ENCODE measurements at regions of chr1 and their contacts with region 1.

Region 1: GRCh38 chr1:16440470-16441281 is at the start of gene NECAP2:
- DNase-seq: peak; percentile 90 to 100
- H3K4me3 ChIP-seq: peak within 1 kb of the TSS; percentile 66 to 96 (median 77)
- H3K27ac ChIP-seq: peak within 1 kb of the TSS; percentile 47; the same call in 1 of the 2 replicates
- H3K4me1 ChIP-seq: peaks cover 0 to 2% (median 0%) of the 10 kb centered on the region in 4 experiments; a peak in 3 of 7 replicates
- H3K27me3 ChIP-seq: peaks cover 0 to 4% (median 3%) of the 10 kb centered on the region in 4 experiments; a peak in 1 of 7 replicates
- CTCF ChIP-seq: peak; percentile 85 to 96 (median 86)
- EP300 ChIP-seq: peak in 1 of 2 experiments; percentile 70; a peak in 1 of 3 replicates
- POLR2A ChIP-seq: peak; percentile 21 to 93
- RAD21 ChIP-seq: peak; percentile 43 to 55
- total RNA-seq, gene NECAP2: 24.4 and 26.6 TPM in 2 replicates

Region 2: DNA sequence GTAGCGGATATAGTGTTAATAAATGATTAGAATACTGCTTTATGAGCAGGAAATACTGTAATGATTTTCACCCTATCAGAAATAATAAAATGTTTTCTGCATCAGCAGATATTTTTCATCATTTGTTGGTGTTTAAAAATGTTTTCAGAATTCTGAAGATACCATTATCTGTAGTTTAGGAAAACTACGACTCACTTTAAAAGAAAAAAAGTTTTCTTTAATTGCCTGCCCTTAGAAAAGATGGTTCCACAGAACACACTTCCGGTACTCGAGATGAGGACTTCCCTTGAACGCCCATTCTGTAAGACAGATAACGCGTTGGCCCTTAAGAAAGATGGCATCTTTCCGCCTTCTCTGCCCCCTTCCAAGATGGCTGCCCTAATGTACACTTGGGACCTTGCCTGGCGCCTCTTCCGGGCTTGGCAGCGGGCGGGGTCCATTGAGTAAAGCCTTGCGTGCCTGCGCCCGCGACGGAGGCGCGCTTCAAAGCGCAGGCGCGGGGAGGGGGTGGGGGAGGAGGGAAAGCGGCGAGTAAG is 73.9 kb before region 1 on chr1 and contains the start of gene SZRD1:
- CTCF ChIA-PET with region 1: interaction called, 11 read pairs
- POLR2A ChIA-PET with region 1: interaction called, 3 read pairs
- DNase-seq: peak; percentile 82 to 97
- H3K4me3 ChIP-seq: peak within 1 kb of the TSS; percentile 72 to 91 (median 80)
- H3K27ac ChIP-seq: peak within 1 kb of the TSS; percentile 88
- H3K4me1 ChIP-seq: peaks cover 0 to 3% (median 1%) of the 10 kb centered on the region in 4 experiments; a peak in 2 of 7 replicates
- H3K27me3 ChIP-seq: no peaks in the 10 kb centered on the region
- CTCF ChIP-seq: no peak
- EP300 ChIP-seq: 0 out of 3 replicates have a peak, but pooled peaks of 1 of the 2 experiments have one; percentile 53
- POLR2A ChIP-seq: no peak
- RAD21 ChIP-seq: no peak
- total RNA-seq, gene SZRD1: 108 and 116 TPM in 2 replicates

Region 3: GRCh38 chr1:16425125-16426025 is 15.3 kb before region 1 on chr1:
- CTCF ChIA-PET with region 1: interaction called, 13 read pairs
- POLR2A ChIA-PET with region 1: interaction called, 6 read pairs
- DNase-seq: no peak
- H3K4me3 ChIP-seq: no peak overlapping the region
- H3K27ac ChIP-seq: no peak overlapping the region
- H3K4me1 ChIP-seq: no peaks in the 10 kb centered on the region
- H3K27me3 ChIP-seq: 0 out of 7 replicates have a peak, but pooled peaks cover 0 to 2% (median 0%) of the 10 kb centered on the region in 4 experiments
- CTCF ChIP-seq: no peak
- EP300 ChIP-seq: no peak
- POLR2A ChIP-seq: no peak
- RAD21 ChIP-seq: no peak

Region 4: DNA sequence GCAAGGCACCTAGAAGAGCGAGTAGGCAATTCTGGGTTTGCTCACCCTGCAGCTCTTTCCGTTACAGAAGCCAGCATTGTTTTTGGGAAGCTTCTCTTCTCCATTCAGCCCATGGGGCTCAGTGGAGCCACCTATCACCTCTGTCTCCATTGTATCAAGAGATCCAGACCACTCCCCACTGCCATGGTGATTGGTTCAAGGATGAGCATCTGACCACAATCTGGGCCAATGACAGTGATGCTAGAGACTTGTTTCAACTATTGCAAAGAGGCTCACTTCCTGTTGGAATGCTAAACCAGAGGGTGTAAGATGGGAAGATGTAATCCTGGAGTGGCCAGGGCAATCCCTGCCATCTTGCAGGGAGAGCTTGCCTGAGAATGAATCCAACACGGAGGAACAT is 10.1 kb before region 1 on chr1:
- CTCF ChIA-PET with region 1: interaction called, 13 read pairs
- POLR2A ChIA-PET with region 1: interaction called, 6 read pairs
- DNase-seq: no peak
- H3K4me3 ChIP-seq: no peak overlapping the region
- H3K27ac ChIP-seq: no peak overlapping the region
- H3K4me1 ChIP-seq: peaks cover 0 to 4% (median 0%) of the 10 kb centered on the region in 4 experiments; a peak in 1 of 7 replicates
- H3K27me3 ChIP-seq: no peaks in the 10 kb centered on the region
- CTCF ChIP-seq: peak in 1 of 3 experiments; percentile 3; a peak in 1 of 4 replicates
- EP300 ChIP-seq: no peak
- POLR2A ChIP-seq: no peak; a peak in 1 of 3 replicates
- RAD21 ChIP-seq: no peak

Region 5: GRCh38 chr1:16451841-16452528 is 11.3 kb after region 1 on chr1:
- CTCF ChIA-PET with region 1: interaction called, 19 read pairs
- POLR2A ChIA-PET with region 1: interaction called, 15 read pairs
- DNase-seq: no peak
- H3K4me3 ChIP-seq: no peak overlapping the region
- H3K27ac ChIP-seq: no peak overlapping the region
- H3K4me1 ChIP-seq: no peaks in the 10 kb centered on the region
- H3K27me3 ChIP-seq: no peaks in the 10 kb centered on the region
- CTCF ChIP-seq: no peak
- EP300 ChIP-seq: no peak
- POLR2A ChIP-seq: no peak
- RAD21 ChIP-seq: no peak

Region 6: GRCh38 chr1:16644193-16644481 is 203.5 kb after region 1 on chr1:
- CTCF ChIA-PET with region 1: no interaction called
- POLR2A ChIA-PET with region 1: no interaction called
- DNase-seq: no peak
- H3K4me3 ChIP-seq: peak overlapping the region; percentile 48 to 100 (median 70)
- H3K27ac ChIP-seq: no peak overlapping the region; the same call in 1 of the 2 replicates
- H3K4me1 ChIP-seq: peaks cover 0 to 19% (median 12%) of the 10 kb centered on the region in 4 experiments; a peak in 6 of 7 replicates
- H3K27me3 ChIP-seq: peaks cover 7 to 23% (median 18%) of the 10 kb centered on the region in 4 experiments; a peak in 6 of 7 replicates
- CTCF ChIP-seq: no peak; a peak in 1 of 4 replicates
- EP300 ChIP-seq: no peak
- POLR2A ChIP-seq: no peak
- RAD21 ChIP-seq: 0 out of 4 replicates have a peak, but pooled peaks of 1 of the 2 experiments have one; percentile 0

Measured in H1 (cell line).